ENCODE measurements at regions of chr19 and their contacts with region 1.

Region 1: DNA sequence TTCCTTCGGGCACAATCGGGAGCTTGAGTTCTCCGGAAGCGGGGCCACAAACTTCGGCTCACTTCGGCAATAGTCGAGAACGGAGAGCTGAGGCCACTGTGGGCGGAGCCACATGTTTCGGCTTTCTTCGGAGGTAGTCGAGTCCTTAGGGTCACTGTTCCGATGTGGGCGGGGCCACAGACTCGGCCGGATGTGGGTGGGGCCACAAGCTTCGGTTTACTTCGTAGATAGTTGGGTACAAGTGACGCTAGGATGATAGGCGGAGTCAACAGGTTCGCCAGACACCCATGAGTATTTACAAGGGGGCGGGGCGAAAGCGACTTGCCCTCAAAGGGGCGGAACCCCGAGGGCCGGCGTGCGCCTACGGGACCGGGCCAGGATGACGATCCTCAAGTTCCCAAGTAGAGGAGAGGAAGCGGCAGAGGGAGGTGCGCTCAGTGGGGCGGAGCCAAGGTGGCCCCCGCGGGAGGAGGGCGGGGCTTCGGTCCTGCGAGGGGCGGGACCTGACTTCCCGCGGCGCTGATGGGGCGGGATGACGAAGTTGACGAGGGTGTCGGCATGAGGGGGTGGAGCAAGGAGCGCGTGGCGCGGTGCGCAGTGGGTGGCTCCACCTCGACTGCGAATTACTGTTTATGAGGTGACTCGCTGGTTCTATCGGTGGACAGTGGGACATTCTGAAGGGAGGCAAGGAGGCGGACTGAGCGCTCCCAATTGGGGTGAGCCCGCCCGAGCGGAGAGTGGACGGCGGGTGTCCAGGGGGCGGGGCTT is 539 bp upstream of the MBOAT7 start:
- H3K4me3 ChIP-seq: peak overlapping the region; percentile 87
- H3K27ac ChIP-seq: peak overlapping the region; percentile 95
- H3K4me1 ChIP-seq: peaks cover 14% of the 10 kb centered on the region
- CTCF ChIP-seq: no peak; the same call in 1 of the 2 replicates

Region 2: DNA sequence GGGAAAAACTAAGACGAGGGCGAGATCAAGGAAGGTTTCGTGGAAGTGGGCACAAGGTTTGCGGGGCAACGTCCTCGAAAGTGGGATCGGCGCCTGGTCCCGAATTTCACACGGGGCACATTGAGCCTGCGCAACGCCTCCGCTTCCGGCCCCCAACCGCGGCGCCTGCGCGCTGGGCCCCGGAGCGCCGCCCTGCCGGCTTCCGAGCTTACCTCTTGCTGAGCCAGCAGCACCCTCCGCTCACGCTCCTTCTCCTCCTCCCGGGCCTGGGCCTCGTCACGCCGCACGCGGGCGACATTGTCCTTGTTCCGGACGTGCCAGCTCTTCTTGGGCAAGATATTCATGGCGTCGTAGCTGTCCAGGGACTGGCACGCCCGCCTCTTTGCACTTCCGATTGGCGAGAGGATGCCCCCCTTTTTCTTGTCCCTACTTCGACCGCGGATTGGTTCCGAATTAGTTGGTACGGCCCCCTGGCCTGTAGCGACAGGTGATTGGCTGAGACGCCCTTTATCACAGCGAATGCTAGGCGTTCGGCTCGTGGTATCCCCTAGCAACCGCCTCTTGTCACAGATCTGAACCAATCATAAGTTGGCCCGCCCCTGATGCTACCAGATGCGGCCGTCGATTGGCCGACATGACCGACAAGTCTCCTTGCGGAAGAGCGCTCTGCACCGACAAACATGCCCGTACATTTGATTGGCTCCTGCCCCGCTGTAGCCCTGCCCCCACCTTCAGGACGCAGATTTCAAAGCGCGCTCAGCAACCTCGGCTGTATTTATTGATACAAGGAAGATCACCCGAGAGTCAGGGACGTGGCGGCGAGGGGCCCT is 30.4 kb before region 1 on chr19 and contains the start of gene LENG1:
- CTCF ChIA-PET with region 1: no interaction called
- POLR2A ChIA-PET with region 1: interaction called, 37 read pairs
- H3K4me3 ChIP-seq: peak within 1 kb of the TSS; percentile 96
- H3K27ac ChIP-seq: peak within 1 kb of the TSS; percentile 78
- H3K4me1 ChIP-seq: peaks cover 4% of the 10 kb centered on the region; the same call in 1 of the 2 replicates
- CTCF ChIP-seq: peak; percentile 90

Region 3: GRCh38 chr19:54203151-54203611 is 13.3 kb after region 1 on chr19:
- CTCF ChIA-PET with region 1: interaction called, 5 read pairs
- POLR2A ChIA-PET with region 1: interaction called, 241 read pairs
- H3K4me3 ChIP-seq: no peak overlapping the region
- H3K27ac ChIP-seq: no peak overlapping the region
- H3K4me1 ChIP-seq: peaks cover 10% of the 10 kb centered on the region
- CTCF ChIP-seq: no peak

Region 4: GRCh38 chr19:54218960-54219661 is 29.2 kb after region 1 on chr19:
- CTCF ChIA-PET with region 1: no interaction called
- POLR2A ChIA-PET with region 1: no interaction called
- H3K4me3 ChIP-seq: no peak overlapping the region
- H3K27ac ChIP-seq: no peak overlapping the region
- H3K4me1 ChIP-seq: no peaks in the 10 kb centered on the region
- CTCF ChIP-seq: no peak

Region 5: DNA sequence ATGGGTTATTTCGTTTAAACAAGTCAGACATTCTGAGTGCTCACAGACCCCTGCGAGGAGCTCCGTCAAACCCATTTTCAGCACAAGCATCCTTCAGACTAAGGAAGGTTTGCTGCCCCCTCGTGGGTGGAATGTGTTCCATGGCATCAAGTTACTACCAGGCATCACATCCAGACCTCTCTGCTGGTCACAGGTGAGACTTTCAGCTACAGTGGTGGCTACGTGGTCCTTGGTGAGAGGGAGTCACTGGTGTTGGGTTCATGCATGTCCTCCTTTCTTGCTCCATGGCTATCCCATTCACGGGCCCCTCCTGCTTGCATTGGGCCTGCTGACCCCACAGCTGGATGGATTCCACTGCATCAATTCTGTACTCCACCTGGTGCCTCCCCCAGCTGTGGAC is 76.2 kb after region 1 on chr19:
- CTCF ChIA-PET with region 1: interaction called, 28 read pairs
- POLR2A ChIA-PET with region 1: interaction called, 6 read pairs
- H3K4me3 ChIP-seq: no peak overlapping the region
- H3K27ac ChIP-seq: no peak overlapping the region
- H3K4me1 ChIP-seq: no peaks in the 10 kb centered on the region
- CTCF ChIP-seq: peak; percentile 52

Region 6: DNA sequence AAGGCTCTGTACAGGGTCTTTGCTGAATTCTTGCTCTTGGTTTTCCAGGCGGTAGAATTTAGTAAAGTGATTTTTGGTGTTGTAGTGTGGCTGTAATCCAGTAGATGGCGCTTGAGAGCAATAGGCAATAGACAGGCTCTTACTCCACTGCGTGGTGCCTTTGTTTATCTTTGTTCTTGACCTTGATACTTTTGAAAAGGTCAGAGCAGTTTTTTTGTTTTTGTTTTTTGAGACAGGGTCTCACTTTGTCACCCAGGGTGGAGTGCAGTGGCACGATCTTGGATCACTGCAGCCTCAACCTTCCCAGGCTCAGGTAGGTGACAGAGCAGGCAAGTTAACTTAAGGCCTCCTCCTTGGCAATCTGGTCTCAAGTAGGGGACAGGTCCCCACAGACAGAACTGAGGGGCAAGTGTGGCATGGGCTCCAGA is 135.3 kb after region 1 on chr19:
- CTCF ChIA-PET with region 1: no interaction called
- POLR2A ChIA-PET with region 1: no interaction called
- H3K4me3 ChIP-seq: no peak overlapping the region
- H3K27ac ChIP-seq: no peak overlapping the region
- H3K4me1 ChIP-seq: no peaks in the 10 kb centered on the region
- CTCF ChIP-seq: peak; percentile 68